ENCODE measurements at regions of chr2 and their contacts with region 1.

Region 1: GRCh38 chr2:135600915-135601314 is 69.6 kb downstream of the R3HDM1 start:
- DNase-seq: peak; percentile 9
- H3K4me3 ChIP-seq: no peak overlapping the region
- H3K27ac ChIP-seq: no peak overlapping the region
- H3K4me1 ChIP-seq: no peaks in the 10 kb centered on the region
- H3K27me3 ChIP-seq: no peaks in the 10 kb centered on the region
- CTCF ChIP-seq: no peak
- POLR2A ChIP-seq: no peak

Region 2: DNA sequence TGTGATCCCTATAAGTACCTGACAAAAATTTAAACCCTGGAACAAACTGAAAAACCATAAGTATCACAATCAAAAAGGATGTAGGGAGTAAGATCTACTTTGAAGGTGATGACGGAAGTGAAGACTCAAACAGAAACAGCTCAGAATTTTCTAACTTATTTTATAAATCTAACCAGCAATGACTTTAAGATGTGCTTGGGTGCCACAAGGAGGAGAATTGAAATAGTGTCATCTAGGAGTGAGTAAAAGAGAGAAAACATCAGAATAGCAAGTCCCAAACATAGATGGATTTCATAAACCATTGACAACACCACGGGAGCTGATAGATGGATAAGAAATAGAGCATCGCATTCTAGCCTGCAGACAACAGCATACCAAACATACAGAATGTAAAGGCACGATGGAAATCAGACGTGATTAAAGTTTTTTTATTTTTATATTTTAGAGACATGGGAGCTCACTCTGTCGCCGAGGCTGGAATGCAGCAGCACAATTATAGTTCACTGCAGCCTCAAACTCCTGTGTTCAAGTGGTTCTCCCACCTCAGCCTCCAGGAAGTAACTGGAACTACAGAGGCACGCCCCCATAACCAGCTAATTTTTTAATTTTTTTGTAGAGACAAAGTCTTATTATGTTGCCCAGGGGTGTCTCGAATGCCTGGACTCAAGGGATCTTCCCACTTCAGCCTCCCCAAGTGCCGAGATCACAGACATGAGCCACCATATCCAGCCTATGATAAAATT is 590.5 kb before region 1 on chr2:
- CTCF ChIA-PET with region 1: interaction called, 63 read pairs
- POLR2A ChIA-PET with region 1: no interaction called
- dilution Hi-C with region 1: no loop called
- intact Hi-C with region 1: no loop called
- DNase-seq: no peak
- H3K4me3 ChIP-seq: no peak overlapping the region
- H3K27ac ChIP-seq: no peak overlapping the region
- H3K4me1 ChIP-seq: no peaks in the 10 kb centered on the region
- H3K27me3 ChIP-seq: peaks cover 10% of the 10 kb centered on the region in 2 experiments
- CTCF ChIP-seq: no peak
- POLR2A ChIP-seq: no peak

Region 3: GRCh38 chr2:135202756-135203155 is 398.2 kb before region 1 on chr2:
- CTCF ChIA-PET with region 1: no interaction called
- POLR2A ChIA-PET with region 1: no interaction called
- dilution Hi-C with region 1: no loop called
- intact Hi-C with region 1: no loop called
- DNase-seq: no peak
- H3K4me3 ChIP-seq: no peak overlapping the region
- H3K27ac ChIP-seq: no peak overlapping the region
- H3K4me1 ChIP-seq: no peaks in the 10 kb centered on the region
- H3K27me3 ChIP-seq: no peaks in the 10 kb centered on the region
- CTCF ChIP-seq: no peak
- POLR2A ChIP-seq: no peak

Measured in endothelial cell of umbilical vein (primary cell).